Activated T-helper 1 cell treated with anti-CD3 and anti-CD28 coated beads, Interleukin-12 subunit alpha, Interleukin-12 subunit beta, Interleukin-2, Interleukin-4 antibody, amounts not matched to agents 30 ng/mL and 10 ng/mL and 1 ng/mL, durations not matched to agents 14 hours and 24 hours and 36 hours (primary cell): ENCODE measurements at regions of chr17 and their contacts with region 1.

Region 1: GRCh38 chr17:68512247-68512982 is at the start of gene PRKAR1A:
- DNase-seq: peak; percentile 91
- H3K4me3 Mint-ChIP-seq: peak within 1 kb of the TSS; percentile 97
- H3K27ac Mint-ChIP-seq: peak within 1 kb of the TSS; percentile 99
- H3K4me1 Mint-ChIP-seq: peaks cover 59% of the 10 kb centered on the region
- H3K27me3 Mint-ChIP-seq: no peaks in the 10 kb centered on the region
- total RNA-seq, gene PRKAR1A: 209 and 214 TPM in 2 replicates

Region 2: GRCh38 chr17:67717624-67718329 is 794.6 kb before region 1 on chr17 and contains the start of gene NOL11:
- intact Hi-C with region 1: loop called (anchors 5 kb)
- DNase-seq: peak; percentile 99
- H3K4me3 Mint-ChIP-seq: peak within 1 kb of the TSS; percentile 99
- H3K27ac Mint-ChIP-seq: peak within 1 kb of the TSS; percentile 99
- H3K4me1 Mint-ChIP-seq: peaks cover 16% of the 10 kb centered on the region
- H3K27me3 Mint-ChIP-seq: peaks cover 4% of the 10 kb centered on the region
- total RNA-seq, gene NOL11: 107 and 118 TPM in 2 replicates

Region 3: DNA sequence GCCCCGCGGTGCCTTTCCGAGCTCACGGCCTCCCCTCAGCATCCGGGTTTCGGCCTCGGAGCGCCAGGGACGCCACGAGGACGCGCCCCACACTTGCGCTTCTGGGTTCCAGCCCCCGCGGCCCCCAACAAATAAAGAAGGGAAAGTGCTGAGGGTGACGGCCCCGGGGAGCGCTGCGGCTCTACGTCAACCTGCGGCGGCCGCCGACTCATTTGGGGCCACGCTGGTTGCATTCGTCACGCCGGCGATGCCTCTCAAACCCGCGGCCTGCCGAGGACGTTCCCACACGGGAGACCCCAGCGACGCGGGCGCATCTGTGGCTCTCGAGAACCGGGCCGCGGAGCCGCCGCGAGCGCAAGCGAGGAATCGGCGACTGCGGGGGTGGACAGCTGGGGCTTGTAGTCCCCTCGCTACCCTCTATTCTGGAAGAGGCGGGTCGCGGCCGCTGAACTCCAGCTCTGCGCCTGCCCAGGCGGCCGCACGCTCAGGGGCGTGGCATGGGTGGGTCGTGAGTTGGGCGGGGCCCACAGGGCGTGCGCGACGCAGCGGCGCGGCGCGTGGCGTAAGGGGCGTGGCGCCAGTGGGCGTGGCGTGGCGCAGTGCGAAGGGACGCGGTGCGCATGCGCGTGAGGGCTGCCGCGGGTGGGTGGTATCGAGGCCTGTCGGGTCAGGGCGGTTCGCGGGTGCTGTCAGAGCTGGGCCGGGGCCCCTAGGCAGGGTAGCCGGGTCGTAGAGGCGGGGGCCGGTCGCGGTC is 264.8 kb before region 1 on chr17 and contains the start of gene AMZ2:
- intact Hi-C with region 1: loop called (anchors 5 kb)
- DNase-seq: peak; percentile 98
- H3K4me3 Mint-ChIP-seq: peak within 1 kb of the TSS; percentile 88
- H3K27ac Mint-ChIP-seq: peak within 1 kb of the TSS; percentile 96
- H3K4me1 Mint-ChIP-seq: peaks cover 49% of the 10 kb centered on the region
- H3K27me3 Mint-ChIP-seq: no peaks in the 10 kb centered on the region
- total RNA-seq, gene AMZ2: 67.3 and 75.7 TPM in 2 replicates

Region 4: DNA sequence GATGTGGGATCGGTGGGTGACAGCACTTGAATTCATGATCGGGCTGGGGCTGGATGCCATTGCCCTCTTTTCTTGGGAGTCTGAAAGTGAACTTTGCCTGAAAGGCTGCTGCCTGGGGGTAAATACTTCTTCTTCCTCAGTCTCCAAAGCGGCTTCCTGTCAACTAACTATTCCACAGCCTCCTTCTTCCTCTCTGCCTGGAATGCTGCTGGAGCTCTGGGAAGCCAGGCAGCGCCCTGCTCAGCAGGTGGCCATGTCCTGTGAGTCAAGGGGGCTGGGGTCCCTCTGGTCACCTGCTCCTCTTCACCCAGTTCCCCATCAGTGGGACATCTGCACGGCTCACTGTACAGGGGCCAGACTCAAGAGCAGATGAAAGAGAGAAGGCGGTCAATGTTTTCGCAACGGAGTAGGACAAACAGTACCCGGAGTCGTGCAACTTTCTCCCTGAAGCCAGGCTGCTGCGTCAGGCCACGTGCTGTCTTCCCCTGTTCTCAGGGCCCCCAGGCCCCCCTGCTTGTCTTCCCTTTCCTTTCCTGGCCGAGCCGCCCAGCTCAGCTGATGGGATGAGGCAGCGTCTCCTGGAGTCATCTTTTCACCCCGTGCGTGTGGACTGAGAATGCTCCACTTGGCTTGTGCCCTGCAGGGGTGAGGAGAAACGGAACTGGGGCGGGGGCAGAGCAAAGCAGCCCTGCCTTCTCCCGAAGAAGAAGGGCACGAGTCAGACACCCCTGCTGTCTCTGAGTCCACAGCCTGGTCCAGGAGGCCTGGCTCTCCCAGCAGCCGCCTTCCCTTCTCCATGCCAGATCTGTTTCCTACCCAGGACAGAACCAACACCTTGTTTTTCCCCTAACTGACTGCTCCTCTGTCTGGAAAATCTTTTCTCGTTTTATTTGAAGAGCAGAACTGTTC is 134.3 kb before region 1 on chr17:
- intact Hi-C with region 1: no loop called
- DNase-seq: no peak
- H3K4me3 Mint-ChIP-seq: no peak overlapping the region
- H3K27ac Mint-ChIP-seq: no peak overlapping the region
- H3K4me1 Mint-ChIP-seq: peaks cover 11% of the 10 kb centered on the region
- H3K27me3 Mint-ChIP-seq: peaks cover 15% of the 10 kb centered on the region

Region 5: DNA sequence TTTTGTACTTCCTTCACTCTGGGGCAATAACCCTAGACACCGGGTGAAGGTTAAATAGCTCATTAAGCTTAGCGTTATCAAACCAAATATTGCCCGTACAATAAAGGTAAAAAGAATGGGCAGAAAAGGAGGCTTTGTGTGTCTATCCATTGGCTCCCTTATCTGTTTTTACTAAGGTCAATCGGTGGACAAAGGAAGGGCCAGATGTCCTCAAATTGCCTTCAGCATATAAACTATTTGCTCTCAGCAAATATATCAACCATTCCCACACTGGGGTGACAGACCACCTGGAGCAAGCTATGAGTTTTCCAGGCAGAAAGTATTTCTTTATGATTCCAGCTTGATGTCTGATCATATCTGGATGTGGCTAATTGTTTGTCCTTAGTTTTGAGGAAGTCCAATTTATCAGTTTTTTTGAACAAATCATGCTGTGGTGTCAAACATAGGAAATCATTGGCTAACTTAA is 29.8 kb before region 1 on chr17:
- intact Hi-C with region 1: no loop called
- DNase-seq: no peak
- H3K4me3 Mint-ChIP-seq: no peak overlapping the region
- H3K27ac Mint-ChIP-seq: no peak overlapping the region
- H3K4me1 Mint-ChIP-seq: peaks cover 1% of the 10 kb centered on the region
- H3K27me3 Mint-ChIP-seq: peaks cover 43% of the 10 kb centered on the region

Region 6: GRCh38 chr17:68497885-68498319 is 14.5 kb before region 1 on chr17:
- intact Hi-C with region 1: loop called (anchors 1 kb)
- DNase-seq: no peak
- H3K4me3 Mint-ChIP-seq: peak overlapping the region; percentile 23
- H3K27ac Mint-ChIP-seq: peak overlapping the region; percentile 81
- H3K4me1 Mint-ChIP-seq: peaks cover 35% of the 10 kb centered on the region
- H3K27me3 Mint-ChIP-seq: no peaks in the 10 kb centered on the region

Region 7: GRCh38 chr17:68527323-68527722 is 14.9 kb after region 1 on chr17:
- intact Hi-C with region 1: no loop called
- DNase-seq: no peak
- H3K4me3 Mint-ChIP-seq: no peak overlapping the region
- H3K27ac Mint-ChIP-seq: peak overlapping the region; percentile 20
- H3K4me1 Mint-ChIP-seq: peaks cover 16% of the 10 kb centered on the region
- H3K27me3 Mint-ChIP-seq: no peaks in the 10 kb centered on the region

Region 8: DNA sequence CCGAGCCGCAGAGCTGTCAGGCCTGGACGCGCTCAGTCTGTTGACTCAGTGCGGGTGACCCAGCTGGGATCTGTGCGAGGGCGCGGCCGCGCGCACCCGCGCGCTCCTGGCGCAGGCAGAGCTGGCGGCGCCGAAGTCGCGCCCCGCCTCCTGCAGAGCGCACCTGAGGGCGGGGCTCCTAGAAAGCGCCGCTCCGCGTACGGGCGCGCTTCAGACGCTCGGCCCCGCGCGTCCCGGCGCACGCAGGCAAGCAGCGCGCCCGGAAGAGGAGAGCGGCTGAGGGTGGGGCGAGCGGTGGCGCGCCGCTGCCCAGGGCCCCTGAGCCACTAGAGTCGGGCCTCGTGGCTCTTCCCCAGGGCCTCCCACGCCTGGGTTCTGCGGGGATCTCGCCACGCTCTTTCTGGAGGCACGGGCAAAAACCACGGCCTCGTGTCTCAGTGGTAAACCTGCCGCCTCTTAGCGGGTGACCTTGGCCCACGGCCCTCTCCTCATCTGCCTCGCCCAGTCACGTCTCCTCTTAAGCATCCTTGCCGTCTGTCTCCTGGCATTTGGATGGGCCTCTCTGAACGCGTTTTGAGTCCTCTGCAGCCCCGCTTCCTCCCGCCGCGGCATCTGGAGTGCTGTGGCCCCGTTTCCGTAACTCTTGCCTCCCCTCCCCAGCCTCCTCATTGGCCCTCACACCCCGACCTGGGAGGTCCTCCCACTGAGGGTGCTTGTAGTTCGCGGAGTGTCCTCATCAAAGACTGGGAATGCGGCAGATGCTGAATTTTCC is 814.8 kb after region 1 on chr17 and contains the start of gene ABCA5:
- intact Hi-C with region 1: loop called (anchors 10 kb)
- DNase-seq: peak; percentile 86
- H3K4me3 Mint-ChIP-seq: peak within 1 kb of the TSS; percentile 97
- H3K27ac Mint-ChIP-seq: peak within 1 kb of the TSS; percentile 96
- H3K4me1 Mint-ChIP-seq: peaks cover 23% of the 10 kb centered on the region
- H3K27me3 Mint-ChIP-seq: peaks cover 13% of the 10 kb centered on the region
- total RNA-seq, gene ABCA5: 12.8 and 15.1 TPM in 2 replicates